ENCODE measurements at regions of chr16 and their contacts with region 1.

Region 1: GRCh38 chr16:8685994-8686621 is 11.7 kb downstream of the ABAT start:
- DNase-seq: peak; percentile 31 to 49
- ATAC-seq: peak; percentile 58 to 96 (median 92)
- H3K4me3 ChIP-seq: no peak overlapping the region
- H3K27ac ChIP-seq: peak overlapping the region in 6 of 10 donors; percentile 10 to 69 (median 30)
- H3K4me1 ChIP-seq: peaks cover 0 to 9% (median 3%) of the 10 kb centered on the region in 9 donors
- H3K27me3 ChIP-seq: no peaks in the 10 kb centered on the region
- CTCF ChIP-seq: no peak

Region 2: DNA sequence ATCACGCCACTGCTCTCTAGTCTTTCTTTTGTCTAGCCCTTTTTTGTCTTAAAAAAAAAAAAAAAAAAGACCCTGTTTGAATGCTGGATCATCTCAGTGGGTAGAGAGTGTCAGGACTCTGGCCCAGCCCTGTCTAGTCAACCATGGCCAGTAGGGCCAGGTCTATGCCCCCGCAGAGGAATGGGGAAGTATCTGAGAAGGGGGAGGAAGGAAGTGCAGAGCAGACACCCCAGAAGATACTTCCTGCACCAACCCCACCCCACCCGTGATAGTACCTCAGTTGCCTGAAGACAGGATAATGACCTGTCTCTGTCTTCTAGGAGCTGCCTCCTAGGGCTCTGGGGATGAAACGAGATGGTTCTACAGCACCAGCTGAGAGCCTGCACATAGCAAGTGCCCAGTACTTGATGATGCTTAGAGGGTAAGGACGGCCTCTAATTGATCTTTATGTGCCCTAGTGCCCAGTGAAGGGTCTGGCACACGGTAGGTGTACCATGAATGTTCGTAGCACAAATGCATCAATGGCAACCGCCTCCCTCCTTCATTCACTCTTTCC is 43.7 kb after region 1 on chr16:
- intact Hi-C with region 1: loop called in 1 of 10 experiments (anchors 10 kb)
- DNase-seq: no peak
- ATAC-seq: peak in 4 of 8 donors; percentile 25 to 51 (median 38)
- H3K4me3 ChIP-seq: no peak overlapping the region
- H3K27ac ChIP-seq: peak overlapping the region in 1 of 10 donors; percentile 31
- H3K4me1 ChIP-seq: peaks cover 0 to 15% (median 0%) of the 10 kb centered on the region in 9 donors
- H3K27me3 ChIP-seq: no peaks in the 10 kb centered on the region
- CTCF ChIP-seq: no peak

Region 3: GRCh38 chr16:8740775-8741355 is 54.8 kb after region 1 on chr16:
- intact Hi-C with region 1: loop called in 2 of 10 experiments (anchors 10 kb)
- DNase-seq: peak in 1 of 2 donors; percentile 37
- ATAC-seq: peak in 7 of 8 donors; percentile 77 to 96 (median 92)
- H3K4me3 ChIP-seq: no peak overlapping the region
- H3K27ac ChIP-seq: peak overlapping the region in 8 of 10 donors; percentile 9 to 79 (median 55)
- H3K4me1 ChIP-seq: peaks cover 0 to 28% (median 20%) of the 10 kb centered on the region in 9 donors
- H3K27me3 ChIP-seq: no peaks in the 10 kb centered on the region
- CTCF ChIP-seq: no peak

Measured in heart right ventricle (tissue), 16 donors.